SK-N-SH (cell line): ENCODE measurements at regions of chr20 and their contacts with region 1.

Region 1: DNA sequence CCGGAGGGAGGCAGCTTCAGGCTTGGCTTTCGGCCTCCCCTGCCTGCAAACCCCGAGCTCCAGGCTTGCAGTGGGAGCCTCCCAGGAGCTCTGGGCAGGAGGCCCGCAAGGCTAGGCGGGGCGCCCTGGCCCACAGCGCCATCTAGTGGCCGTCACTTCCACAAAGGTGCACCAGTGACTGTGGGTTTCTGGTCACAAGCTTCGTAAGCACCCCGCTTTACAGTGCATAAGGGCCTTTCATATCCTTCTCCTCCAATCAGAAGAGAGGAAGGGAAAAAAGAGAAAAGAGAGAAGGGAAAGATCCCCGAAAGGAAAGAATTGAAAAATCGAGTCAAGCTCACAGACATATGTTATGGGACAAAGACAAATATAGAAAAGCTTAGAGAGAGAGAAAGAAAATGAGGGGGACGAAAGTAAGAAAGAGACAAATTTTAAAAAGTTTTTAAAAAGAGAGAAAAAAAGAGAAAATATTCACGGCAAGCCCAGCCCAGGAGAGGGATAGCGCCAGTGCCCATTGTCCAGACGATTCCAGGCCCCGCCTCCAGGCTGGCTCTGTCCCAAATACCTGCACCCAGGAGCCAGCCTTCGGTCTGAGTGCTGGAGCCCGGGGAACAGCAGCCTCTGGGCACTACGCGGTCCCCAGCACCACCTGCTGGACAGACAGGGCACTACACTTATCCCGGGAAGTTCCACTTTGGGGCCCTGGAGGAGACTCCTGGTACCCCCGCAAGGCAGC is 207.1 kb downstream of the PREX1 start:
- DNase-seq: peak; percentile 90
- H3K4me3 ChIP-seq: peak overlapping the region; percentile 33 to 52; a peak in 3 of 4 replicates
- H3K27ac ChIP-seq: peak overlapping the region in 1 of 2 experiments; percentile 83; a peak in 2 of 4 replicates
- H3K4me1 ChIP-seq: peaks cover 0 to 27% of the 10 kb centered on the region in 2 experiments; a peak in 2 of 4 replicates
- H3K27me3 ChIP-seq: no peaks in the 10 kb centered on the region
- CTCF ChIP-seq: peak; percentile 82
- EP300 ChIP-seq: no peak
- RAD21 ChIP-seq: peak; percentile 97

Region 2: GRCh38 chr20:47691625-47692024 is 929.1 kb before region 1 on chr20:
- CTCF ChIA-PET with region 1: interaction called, 14 read pairs
- POLR2A ChIA-PET with region 1: no interaction called
- DNase-seq: no peak
- H3K4me3 ChIP-seq: no peak overlapping the region
- H3K27ac ChIP-seq: no peak overlapping the region
- H3K4me1 ChIP-seq: peaks cover 0 to 3% of the 10 kb centered on the region in 2 experiments; a peak in 2 of 4 replicates
- H3K27me3 ChIP-seq: no peaks in the 10 kb centered on the region
- CTCF ChIP-seq: no peak
- EP300 ChIP-seq: no peak
- RAD21 ChIP-seq: no peak

Region 3: GRCh38 chr20:47785854-47786764 is 834.6 kb before region 1 on chr20:
- CTCF ChIA-PET with region 1: interaction called, 103 read pairs
- POLR2A ChIA-PET with region 1: interaction called, 8 read pairs
- DNase-seq: peak; percentile 86
- H3K4me3 ChIP-seq: peak overlapping the region; percentile 62 to 63
- H3K27ac ChIP-seq: peak overlapping the region in 1 of 2 experiments; percentile 83; a peak in 2 of 4 replicates
- H3K4me1 ChIP-seq: peaks cover 0 to 71% of the 10 kb centered on the region in 2 experiments; a peak in 2 of 4 replicates
- H3K27me3 ChIP-seq: peaks cover 14% of the 10 kb centered on the region; the same call in 1 of the 2 replicates
- CTCF ChIP-seq: peak; percentile 68
- EP300 ChIP-seq: 0 out of 4 replicates have a peak, but pooled peaks of 1 of the 2 experiments have one; percentile 19
- RAD21 ChIP-seq: peak; percentile 88

Region 4: DNA sequence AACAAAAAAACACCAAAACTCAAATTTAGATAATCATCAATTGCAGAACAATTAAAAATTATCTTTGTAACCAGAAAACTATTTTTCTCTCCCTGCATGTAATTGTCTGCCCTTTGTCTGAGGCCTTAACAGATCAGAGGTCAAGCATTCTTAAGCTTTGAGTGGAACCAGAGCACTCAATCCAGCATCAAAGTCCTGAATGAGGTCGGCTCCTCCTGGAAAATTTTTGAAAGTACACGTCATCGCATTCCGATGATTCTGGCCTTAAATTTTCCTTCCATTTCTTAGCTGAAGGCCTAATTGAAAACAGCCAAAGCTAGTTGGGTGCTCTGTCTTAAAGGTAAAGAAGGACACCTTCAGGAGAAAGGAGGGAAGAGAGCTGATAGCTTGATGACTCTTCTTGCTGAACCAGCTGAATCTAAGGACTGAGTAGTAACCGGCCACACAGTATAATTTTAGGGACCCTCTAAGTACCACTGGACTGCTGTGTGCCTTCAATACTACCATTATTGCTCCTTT is 325.2 kb before region 1 on chr20:
- CTCF ChIA-PET with region 1: interaction called, 36 read pairs
- POLR2A ChIA-PET with region 1: no interaction called
- DNase-seq: no peak
- H3K4me3 ChIP-seq: no peak overlapping the region
- H3K27ac ChIP-seq: peak overlapping the region; percentile 84
- H3K4me1 ChIP-seq: peaks cover 29 to 42% of the 10 kb centered on the region in 2 experiments
- H3K27me3 ChIP-seq: no peaks in the 10 kb centered on the region
- CTCF ChIP-seq: peak; percentile 62
- EP300 ChIP-seq: peak; percentile 48 to 95; a peak in 3 of 4 replicates
- RAD21 ChIP-seq: peak; percentile 67

Region 5: DNA sequence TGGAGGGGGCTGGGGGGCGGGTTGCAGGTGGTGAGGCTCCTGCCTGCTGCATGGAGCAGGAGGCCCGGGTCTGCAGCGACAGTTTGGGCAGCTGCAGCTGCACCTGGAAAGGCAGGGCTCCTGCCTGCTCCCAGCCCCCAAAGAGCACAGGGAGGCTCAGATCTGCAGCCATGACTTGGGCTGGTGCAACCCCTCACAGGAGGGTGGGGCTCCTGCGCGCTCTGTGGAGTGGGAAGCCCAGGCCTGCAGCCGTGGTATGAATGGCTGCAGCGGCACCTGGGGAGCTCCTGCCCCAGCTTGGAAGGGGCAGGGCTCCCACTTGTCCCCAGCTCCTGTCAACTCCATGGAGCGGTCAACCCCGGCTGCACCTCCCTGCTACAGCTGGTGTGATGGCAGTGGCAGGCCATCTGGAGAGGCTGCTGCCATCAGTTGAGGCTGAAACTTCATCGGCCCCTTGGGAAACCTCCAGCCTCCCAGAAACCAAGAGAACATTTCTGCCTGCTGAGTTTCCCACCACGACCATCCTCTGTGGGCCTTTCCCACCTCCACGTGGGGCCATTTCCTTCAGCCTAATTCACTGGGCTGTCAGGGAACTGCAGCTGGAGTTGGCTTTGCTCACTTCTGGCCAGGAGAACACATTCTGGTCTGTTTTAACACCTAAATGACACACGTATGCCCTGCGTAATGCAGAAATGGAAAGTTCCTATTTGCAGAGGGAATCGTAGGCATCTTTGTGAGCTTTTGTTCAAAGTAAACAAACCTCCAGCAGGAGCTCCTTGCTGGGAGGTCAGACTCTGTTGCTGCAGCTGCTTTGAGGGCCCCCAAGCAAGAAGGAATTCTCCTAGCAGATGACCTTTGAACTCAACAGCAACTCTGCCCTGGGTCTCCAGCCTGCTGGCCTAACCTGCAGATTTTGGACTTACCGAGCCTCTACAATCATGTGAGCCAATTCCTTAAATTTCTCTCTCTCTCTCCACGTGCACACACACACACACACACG is 221.9 kb before region 1 on chr20:
- CTCF ChIA-PET with region 1: interaction called, 30 read pairs
- POLR2A ChIA-PET with region 1: no interaction called
- DNase-seq: no peak
- H3K4me3 ChIP-seq: no peak overlapping the region
- H3K27ac ChIP-seq: peak overlapping the region in 1 of 2 experiments; percentile 97; a peak in 2 of 4 replicates
- H3K4me1 ChIP-seq: peaks cover 0 to 48% of the 10 kb centered on the region in 2 experiments; a peak in 2 of 4 replicates
- H3K27me3 ChIP-seq: no peaks in the 10 kb centered on the region; the same call in none of the 2 replicates
- CTCF ChIP-seq: no peak
- EP300 ChIP-seq: no peak
- RAD21 ChIP-seq: no peak

Region 6: GRCh38 chr20:48538420-48539203 is 82.1 kb before region 1 on chr20:
- CTCF ChIA-PET with region 1: interaction called, 141 read pairs
- POLR2A ChIA-PET with region 1: no interaction called
- DNase-seq: no peak
- H3K4me3 ChIP-seq: no peak overlapping the region
- H3K27ac ChIP-seq: no peak overlapping the region
- H3K4me1 ChIP-seq: peaks cover 0 to 18% of the 10 kb centered on the region in 2 experiments; a peak in 1 of 4 replicates
- H3K27me3 ChIP-seq: no peaks in the 10 kb centered on the region
- CTCF ChIP-seq: no peak
- EP300 ChIP-seq: peak in 1 of 2 experiments; percentile 36; a peak in 1 of 4 replicates
- RAD21 ChIP-seq: no peak

Region 7: GRCh38 chr20:48747784-48748569 is 127.3 kb after region 1 on chr20:
- CTCF ChIA-PET with region 1: no interaction called
- POLR2A ChIA-PET with region 1: no interaction called
- DNase-seq: no peak
- H3K4me3 ChIP-seq: no peak overlapping the region
- H3K27ac ChIP-seq: no peak overlapping the region
- H3K4me1 ChIP-seq: no peaks in the 10 kb centered on the region; a peak in 1 of 4 replicates
- H3K27me3 ChIP-seq: no peaks in the 10 kb centered on the region
- CTCF ChIP-seq: no peak
- EP300 ChIP-seq: no peak
- RAD21 ChIP-seq: no peak